ENCODE measurements at regions of chrX and their contacts with region 1.

Region 1: GRCh38 chrX:27336466-27337091 is 126.6 kb downstream of the PPP4R3C start:
- DNase-seq: peak; percentile 46
- H3K4me3 Mint-ChIP-seq: no peak overlapping the region
- H3K27ac Mint-ChIP-seq: no peak overlapping the region
- H3K4me1 Mint-ChIP-seq: no peaks in the 10 kb centered on the region
- H3K27me3 Mint-ChIP-seq: no peaks in the 10 kb centered on the region
- CTCF ChIP-seq: peak; percentile 68

Region 2: DNA sequence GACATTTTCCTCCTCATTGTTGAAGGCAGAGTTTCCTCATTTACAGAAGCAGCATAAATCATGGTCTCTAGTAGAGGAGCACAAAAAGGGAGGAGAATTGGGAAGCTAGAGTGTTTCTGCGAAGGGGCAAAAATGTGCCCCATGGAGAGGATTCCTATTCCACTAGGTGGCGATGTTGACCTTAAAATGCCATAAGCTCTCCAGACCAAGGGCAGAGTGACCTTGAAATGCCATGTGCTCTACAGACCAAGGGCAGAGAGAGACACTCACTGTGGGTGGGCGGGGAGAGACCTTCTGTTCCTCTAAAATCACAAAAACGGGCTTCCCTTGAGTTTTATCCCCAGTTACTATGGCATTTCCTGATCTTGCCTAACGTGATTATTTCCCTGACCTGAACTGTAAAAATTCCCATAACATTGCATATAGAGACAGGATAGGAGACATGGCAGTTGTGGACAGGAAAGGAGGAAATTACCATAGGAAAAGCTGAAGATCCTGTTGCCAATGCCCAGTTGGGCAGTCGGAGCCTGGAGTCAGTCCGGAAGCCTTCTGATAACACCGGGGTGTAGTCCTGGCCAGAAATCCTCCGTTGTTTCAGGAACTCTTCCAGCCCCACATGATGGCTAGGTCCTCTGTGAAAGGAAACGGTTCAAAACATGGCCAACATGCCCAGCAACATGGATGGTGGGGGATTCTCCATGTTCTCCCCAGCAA is 552.9 kb before region 1 on chrX:
- CTCF ChIA-PET with region 1: interaction called, 3 read pairs
- POLR2A ChIA-PET with region 1: no interaction called
- intact Hi-C with region 1: loop called (anchors 5 kb)
- DNase-seq: peak; percentile 44
- H3K4me3 Mint-ChIP-seq: no peak overlapping the region
- H3K27ac Mint-ChIP-seq: no peak overlapping the region
- H3K4me1 Mint-ChIP-seq: peaks cover 5% of the 10 kb centered on the region
- H3K27me3 Mint-ChIP-seq: no peaks in the 10 kb centered on the region
- CTCF ChIP-seq: peak; percentile 49

Region 3: GRCh38 chrX:28120076-28120475 is 783.5 kb after region 1 on chrX:
- CTCF ChIA-PET with region 1: no interaction called
- POLR2A ChIA-PET with region 1: no interaction called
- intact Hi-C with region 1: no loop called
- DNase-seq: peak; percentile 89
- H3K4me3 Mint-ChIP-seq: peak overlapping the region; percentile 21
- H3K27ac Mint-ChIP-seq: no peak overlapping the region
- H3K4me1 Mint-ChIP-seq: peaks cover 8% of the 10 kb centered on the region
- H3K27me3 Mint-ChIP-seq: no peaks in the 10 kb centered on the region
- CTCF ChIP-seq: no peak

Measured in MCF 10A (cell line).